Mammary epithelial cell (primary cell): ENCODE measurements at regions of chr11 and their contacts with region 1.

Region 1: GRCh38 chr11:111612224-111612623 is 10.0 kb downstream of the SIK2 start:
- DNase-seq: no peak
- H3K4me3 ChIP-seq: no peak overlapping the region
- H3K27ac ChIP-seq: no peak overlapping the region
- H3K4me1 ChIP-seq: no peaks in the 10 kb centered on the region
- H3K27me3 ChIP-seq: no peaks in the 10 kb centered on the region
- CTCF ChIP-seq: no peak

Region 2: GRCh38 chr11:111645657-111646316 is 33.6 kb after region 1 on chr11:
- CTCF ChIA-PET with region 1: no interaction called
- dilution Hi-C with region 1: no loop called
- in situ Hi-C with region 1: no loop called
- intact Hi-C with region 1: loop called (anchors 2 kb)
- DNase-seq: no peak
- H3K4me3 ChIP-seq: no peak overlapping the region
- H3K27ac ChIP-seq: no peak overlapping the region
- H3K4me1 ChIP-seq: peaks cover 2% of the 10 kb centered on the region
- H3K27me3 ChIP-seq: no peaks in the 10 kb centered on the region
- CTCF ChIP-seq: no peak